ENCODE measurements at regions of chr11 and their contacts with region 1.

Region 1: DNA sequence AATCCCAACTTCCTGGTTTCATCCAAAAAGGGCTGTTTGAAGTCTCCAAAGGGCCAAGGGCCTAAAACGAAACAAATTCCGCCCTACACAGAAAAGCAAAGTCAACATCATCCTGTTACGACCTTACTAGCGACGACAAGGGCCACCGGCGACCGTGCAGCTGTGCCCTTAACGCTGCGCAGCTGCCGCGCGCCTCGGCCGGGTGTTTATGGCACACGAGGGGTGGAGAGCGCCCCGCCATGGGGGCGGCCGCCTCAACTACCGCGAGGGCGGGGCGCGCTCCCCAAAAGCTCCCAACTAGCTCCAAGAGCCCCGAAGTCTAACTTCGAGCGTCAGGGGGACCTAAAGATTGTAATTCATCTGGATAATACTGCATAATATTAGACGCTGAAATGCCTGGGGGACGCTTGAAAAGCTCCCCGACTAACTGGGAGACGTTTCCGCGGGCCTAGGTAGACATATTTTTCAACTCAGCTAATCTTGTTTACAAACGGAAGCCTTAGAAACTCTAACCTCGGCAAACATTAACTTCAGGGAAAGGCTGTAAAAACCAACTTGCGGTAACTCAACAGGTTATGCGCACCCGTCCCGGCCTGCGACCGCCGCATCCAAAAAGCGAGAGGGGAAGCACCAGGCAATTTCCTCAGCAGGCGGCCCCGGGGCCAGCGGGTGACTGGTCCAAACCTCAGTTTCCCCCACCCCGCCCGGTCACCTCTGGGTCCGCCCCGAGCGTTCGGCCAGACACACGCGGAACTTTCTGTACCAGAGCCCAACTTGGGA is 694 bp downstream of the TMEM123 start:
- DNase-seq: peak; percentile 81
- H3K4me3 Mint-ChIP-seq: peak overlapping the region; percentile 89
- H3K27ac Mint-ChIP-seq: peak overlapping the region; percentile 96
- H3K4me1 Mint-ChIP-seq: peaks cover 70% of the 10 kb centered on the region
- H3K27me3 Mint-ChIP-seq: no peaks in the 10 kb centered on the region

Region 2: GRCh38 chr11:101215069-101215468 is 1236.8 kb before region 1 on chr11:
- CTCF ChIA-PET with region 1: no interaction called
- intact Hi-C with region 1: no loop called
- DNase-seq: no peak
- H3K4me3 Mint-ChIP-seq: no peak overlapping the region
- H3K27ac Mint-ChIP-seq: no peak overlapping the region
- H3K4me1 Mint-ChIP-seq: no peaks in the 10 kb centered on the region
- H3K27me3 Mint-ChIP-seq: no peaks in the 10 kb centered on the region

Region 3: DNA sequence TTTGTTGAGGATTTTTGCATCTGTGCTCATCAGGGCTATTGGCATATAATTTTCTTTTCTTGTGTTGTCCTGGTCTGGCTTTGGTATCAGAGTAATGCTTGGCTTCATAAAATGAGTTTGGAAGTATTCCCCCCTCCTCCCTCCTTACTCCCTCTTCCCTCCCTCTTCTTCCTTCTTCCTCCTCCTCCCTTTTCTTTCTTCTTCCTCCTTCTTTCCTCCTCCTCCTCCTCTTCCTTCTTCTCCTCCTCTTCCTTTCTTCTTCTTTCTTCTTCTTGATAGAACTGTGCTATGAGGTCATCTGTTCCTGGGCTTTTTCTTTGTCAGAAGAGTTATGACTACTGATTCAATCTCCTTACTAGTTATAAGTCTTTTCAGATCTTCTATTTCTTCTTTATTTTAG is 94.8 kb before region 1 on chr11:
- CTCF ChIA-PET with region 1: no interaction called
- intact Hi-C with region 1: no loop called
- DNase-seq: no peak
- H3K4me3 Mint-ChIP-seq: no peak overlapping the region
- H3K27ac Mint-ChIP-seq: peak overlapping the region; percentile 9
- H3K4me1 Mint-ChIP-seq: peaks cover 65% of the 10 kb centered on the region
- H3K27me3 Mint-ChIP-seq: no peaks in the 10 kb centered on the region

Region 4: GRCh38 chr11:102367364-102367763 is 84.5 kb before region 1 on chr11:
- CTCF ChIA-PET with region 1: no interaction called
- intact Hi-C with region 1: loop called (anchors 1 kb)
- DNase-seq: no peak
- H3K4me3 Mint-ChIP-seq: no peak overlapping the region
- H3K27ac Mint-ChIP-seq: peak overlapping the region; percentile 1
- H3K4me1 Mint-ChIP-seq: peaks cover 34% of the 10 kb centered on the region
- H3K27me3 Mint-ChIP-seq: no peaks in the 10 kb centered on the region

Region 5: GRCh38 chr11:102416976-102417375 is 34.9 kb before region 1 on chr11:
- CTCF ChIA-PET with region 1: no interaction called
- intact Hi-C with region 1: loop called (anchors 1 kb)
- DNase-seq: peak; percentile 38
- H3K4me3 Mint-ChIP-seq: peak overlapping the region; percentile 34
- H3K27ac Mint-ChIP-seq: peak overlapping the region; percentile 84
- H3K4me1 Mint-ChIP-seq: peaks cover 92% of the 10 kb centered on the region
- H3K27me3 Mint-ChIP-seq: no peaks in the 10 kb centered on the region

Region 6: GRCh38 chr11:102476812-102477211 is 24.9 kb after region 1 on chr11:
- CTCF ChIA-PET with region 1: interaction called, 8 read pairs
- intact Hi-C with region 1: loop called (anchors 1 kb)
- DNase-seq: peak; percentile 61
- H3K4me3 Mint-ChIP-seq: peak overlapping the region; percentile 17
- H3K27ac Mint-ChIP-seq: peak overlapping the region; percentile 75
- H3K4me1 Mint-ChIP-seq: peaks cover 59% of the 10 kb centered on the region
- H3K27me3 Mint-ChIP-seq: no peaks in the 10 kb centered on the region

Region 7: GRCh38 chr11:102564110-102564509 is 112.2 kb after region 1 on chr11:
- CTCF ChIA-PET with region 1: no interaction called
- intact Hi-C with region 1: no loop called
- DNase-seq: no peak
- H3K4me3 Mint-ChIP-seq: no peak overlapping the region
- H3K27ac Mint-ChIP-seq: no peak overlapping the region
- H3K4me1 Mint-ChIP-seq: peaks cover 43% of the 10 kb centered on the region
- H3K27me3 Mint-ChIP-seq: no peaks in the 10 kb centered on the region

Region 8: GRCh38 chr11:102599642-102600261 is 147.9 kb after region 1 on chr11:
- CTCF ChIA-PET with region 1: no interaction called
- intact Hi-C with region 1: loop called (anchors 1 kb)
- DNase-seq: peak; percentile 43
- H3K4me3 Mint-ChIP-seq: no peak overlapping the region
- H3K27ac Mint-ChIP-seq: peak overlapping the region; percentile 75
- H3K4me1 Mint-ChIP-seq: peaks cover 27% of the 10 kb centered on the region
- H3K27me3 Mint-ChIP-seq: no peaks in the 10 kb centered on the region

Region 9: GRCh38 chr11:103234974-103235373 is 783.1 kb after region 1 on chr11:
- CTCF ChIA-PET with region 1: no interaction called
- intact Hi-C with region 1: no loop called
- DNase-seq: no peak
- H3K4me3 Mint-ChIP-seq: no peak overlapping the region
- H3K27ac Mint-ChIP-seq: no peak overlapping the region
- H3K4me1 Mint-ChIP-seq: no peaks in the 10 kb centered on the region
- H3K27me3 Mint-ChIP-seq: no peaks in the 10 kb centered on the region